ENCODE measurements at regions of chr10 and their contacts with region 1.

Region 1: GRCh38 chr10:73886085-73886529 is 11.8 kb upstream of the CAMK2G start:
- DNase-seq: peak; percentile 73 to 91
- H3K4me3 ChIP-seq: no peak overlapping the region
- CTCF ChIP-seq: peak in 1 of 3 donors; percentile 94
- POLR2A ChIP-seq: no peak

Region 2: DNA sequence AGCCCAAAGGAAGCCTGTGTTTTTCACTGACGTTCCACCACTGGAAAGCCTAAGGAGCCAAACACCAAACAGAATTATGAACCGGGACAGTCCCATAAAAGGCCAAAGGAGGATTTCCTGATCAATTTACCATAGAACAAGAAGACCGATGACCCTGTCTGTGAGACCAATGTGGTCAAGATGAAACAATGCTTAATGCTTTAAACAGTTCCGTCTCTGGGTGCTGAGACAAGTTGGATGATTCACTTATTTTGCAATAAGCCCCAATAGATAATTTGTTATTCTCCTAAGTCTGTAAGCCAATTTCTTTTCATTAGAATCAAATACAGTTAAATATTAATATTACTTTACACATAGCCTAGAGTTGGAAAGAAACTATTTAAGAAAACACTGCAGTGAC is 1395.2 kb before region 1 on chr10:
- intact Hi-C with region 1: no loop called
- DNase-seq: no peak
- H3K4me3 ChIP-seq: no peak overlapping the region
- CTCF ChIP-seq: no peak
- POLR2A ChIP-seq: no peak

Region 3: GRCh38 chr10:73940634-73941221 is 54.6 kb after region 1 on chr10:
- intact Hi-C with region 1: loop called (anchors 5 kb)
- DNase-seq: peak; percentile 82 to 97
- H3K4me3 ChIP-seq: no peak overlapping the region
- CTCF ChIP-seq: peak in 1 of 3 donors; percentile 92
- POLR2A ChIP-seq: no peak

Region 4: GRCh38 chr10:74824184-74824899 is 938.2 kb after region 1 on chr10:
- intact Hi-C with region 1: no loop called
- DNase-seq: peak in 1 of 2 donors; percentile 88
- H3K4me3 ChIP-seq: peak overlapping the region; percentile 67
- CTCF ChIP-seq: no peak
- POLR2A ChIP-seq: no peak

Measured in lower leg skin (tissue), 4 donors.